ENCODE measurements at regions of chr15 and their contacts with region 1.

Region 1: GRCh38 chr15:58770857-58771620 is at the start of gene MINDY2:
- DNase-seq: peak; percentile 92 to 97
- H3K4me3 ChIP-seq: peak within 1 kb of the TSS; percentile 80
- H3K27ac ChIP-seq: peak within 1 kb of the TSS; percentile 87
- H3K4me1 ChIP-seq: peaks cover 37% of the 10 kb centered on the region
- H3K27me3 ChIP-seq: no peaks in the 10 kb centered on the region
- CTCF ChIP-seq: no peak; the same call in 1 of the 2 replicates
- total RNA-seq, gene MINDY2: 18.4 and 22.8 TPM in 2 replicates

Region 2: DNA sequence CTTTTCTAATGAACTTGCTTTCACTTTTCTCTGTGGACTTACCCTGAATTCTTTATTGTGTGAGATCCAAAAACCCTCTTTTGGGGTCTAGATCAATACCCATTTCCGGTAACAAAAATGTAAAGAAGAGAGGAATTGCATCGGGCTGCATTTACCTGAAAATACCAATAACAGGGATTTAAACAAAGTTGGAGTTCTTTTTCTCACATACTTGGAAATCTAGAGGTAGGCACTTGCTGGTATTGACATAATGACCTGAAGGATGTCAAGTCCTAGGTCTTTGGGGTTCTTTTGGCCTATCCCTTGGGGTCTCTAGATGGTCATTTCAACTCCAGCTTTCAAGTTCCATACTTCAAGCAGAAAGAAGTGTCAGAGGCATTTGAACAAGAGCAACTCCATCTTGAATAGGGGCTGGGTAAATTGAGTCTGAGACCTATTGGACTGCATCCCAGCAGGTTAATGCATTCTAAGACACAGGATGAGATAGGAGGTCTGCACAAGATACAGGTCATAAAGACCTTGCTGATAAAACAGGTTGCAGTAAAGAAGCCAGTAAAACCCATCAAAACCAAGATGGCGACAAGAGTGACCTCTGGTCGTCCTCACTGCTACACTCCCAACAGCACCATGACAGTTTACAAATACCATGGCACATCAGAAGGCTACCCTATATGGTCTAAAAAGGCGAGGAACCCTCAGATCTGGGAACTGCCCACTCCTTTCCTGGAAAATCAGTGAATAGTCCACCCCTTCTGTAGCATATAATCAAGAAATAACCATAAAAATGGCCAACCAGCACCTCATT is 1987.0 kb before region 1 on chr15:
- CTCF ChIA-PET with region 1: interaction called, 15 read pairs
- POLR2A ChIA-PET with region 1: no interaction called
- intact Hi-C with region 1: no loop called
- DNase-seq: no peak
- H3K4me3 ChIP-seq: no peak overlapping the region
- H3K27ac ChIP-seq: no peak overlapping the region
- H3K4me1 ChIP-seq: no peaks in the 10 kb centered on the region
- H3K27me3 ChIP-seq: no peaks in the 10 kb centered on the region
- CTCF ChIP-seq: no peak

Region 3: GRCh38 chr15:58433597-58434333 is 337.3 kb before region 1 on chr15:
- CTCF ChIA-PET with region 1: no interaction called
- POLR2A ChIA-PET with region 1: no interaction called
- intact Hi-C with region 1: no loop called
- DNase-seq: no peak
- H3K4me3 ChIP-seq: no peak overlapping the region
- H3K27ac ChIP-seq: peak overlapping the region; percentile 71
- H3K4me1 ChIP-seq: peaks cover 41% of the 10 kb centered on the region
- H3K27me3 ChIP-seq: no peaks in the 10 kb centered on the region
- CTCF ChIP-seq: no peak

Region 4: DNA sequence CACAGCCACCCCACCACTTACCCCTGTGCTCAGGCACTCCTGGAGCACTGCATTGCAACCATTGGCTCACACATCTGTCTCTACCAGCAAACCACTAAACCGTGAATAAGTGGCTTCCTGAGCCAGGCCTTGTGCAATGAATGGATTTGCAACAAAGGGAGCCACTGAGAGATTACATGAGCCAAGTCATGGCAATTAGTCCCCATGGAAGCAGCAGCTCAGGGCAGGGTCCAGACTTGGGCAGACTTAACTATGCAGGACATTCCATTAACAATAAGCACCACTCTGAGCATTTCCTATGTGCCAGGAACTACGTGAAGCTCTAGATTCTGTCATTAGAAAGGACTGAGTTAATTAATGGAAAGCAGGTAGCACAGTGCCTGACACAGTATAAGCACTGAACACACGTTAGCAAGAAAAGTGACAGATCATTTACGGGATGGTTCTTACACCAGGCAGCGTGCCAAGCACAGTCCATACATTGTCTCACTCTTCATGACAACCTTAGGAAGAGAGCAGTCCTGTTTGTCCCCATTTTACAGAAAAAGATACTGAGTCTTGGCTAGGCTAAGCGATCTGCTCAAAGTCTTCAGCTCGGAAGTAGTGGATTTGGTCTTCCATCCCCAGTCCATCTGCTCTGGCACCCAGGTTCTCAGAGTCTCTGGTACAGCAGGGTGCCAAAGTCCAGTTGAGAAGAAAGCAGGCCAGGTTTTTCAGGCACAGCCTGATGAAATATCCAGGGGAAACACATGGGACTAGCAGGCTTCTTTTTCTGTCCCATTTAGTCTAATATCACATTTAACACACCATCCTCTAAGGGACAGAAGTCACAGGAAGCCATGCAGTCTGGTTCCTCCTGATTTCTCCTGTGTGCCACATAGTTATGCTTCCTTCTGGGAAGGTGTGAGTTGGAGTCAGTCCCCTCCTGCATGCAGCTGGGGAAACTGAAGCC is 295.2 kb before region 1 on chr15:
- CTCF ChIA-PET with region 1: no interaction called
- POLR2A ChIA-PET with region 1: no interaction called
- intact Hi-C with region 1: loop called (anchors 10 kb)
- DNase-seq: peak; percentile 8 to 52
- H3K4me3 ChIP-seq: no peak overlapping the region
- H3K27ac ChIP-seq: no peak overlapping the region
- H3K4me1 ChIP-seq: peaks cover 44% of the 10 kb centered on the region
- H3K27me3 ChIP-seq: no peaks in the 10 kb centered on the region
- CTCF ChIP-seq: no peak

Region 5: GRCh38 chr15:58551764-58552504 is 219.1 kb before region 1 on chr15:
- CTCF ChIA-PET with region 1: no interaction called
- POLR2A ChIA-PET with region 1: no interaction called
- intact Hi-C with region 1: loop called (anchors 10 kb)
- DNase-seq: peak; percentile 59 to 92
- H3K4me3 ChIP-seq: peak overlapping the region; percentile 44; the same call in 1 of the 2 replicates
- H3K27ac ChIP-seq: peak overlapping the region; percentile 97
- H3K4me1 ChIP-seq: peaks cover 55% of the 10 kb centered on the region
- H3K27me3 ChIP-seq: no peaks in the 10 kb centered on the region
- CTCF ChIP-seq: no peak

Region 6: GRCh38 chr15:58724466-58724865 is 46.6 kb before region 1 on chr15:
- CTCF ChIA-PET with region 1: interaction called, 15 read pairs
- POLR2A ChIA-PET with region 1: no interaction called
- intact Hi-C with region 1: no loop called
- DNase-seq: peak in 1 of 2 experiments; percentile 35
- H3K4me3 ChIP-seq: no peak overlapping the region
- H3K27ac ChIP-seq: peak overlapping the region; percentile 43; the same call in 1 of the 2 replicates
- H3K4me1 ChIP-seq: no peaks in the 10 kb centered on the region
- H3K27me3 ChIP-seq: no peaks in the 10 kb centered on the region
- CTCF ChIP-seq: no peak

Region 7: DNA sequence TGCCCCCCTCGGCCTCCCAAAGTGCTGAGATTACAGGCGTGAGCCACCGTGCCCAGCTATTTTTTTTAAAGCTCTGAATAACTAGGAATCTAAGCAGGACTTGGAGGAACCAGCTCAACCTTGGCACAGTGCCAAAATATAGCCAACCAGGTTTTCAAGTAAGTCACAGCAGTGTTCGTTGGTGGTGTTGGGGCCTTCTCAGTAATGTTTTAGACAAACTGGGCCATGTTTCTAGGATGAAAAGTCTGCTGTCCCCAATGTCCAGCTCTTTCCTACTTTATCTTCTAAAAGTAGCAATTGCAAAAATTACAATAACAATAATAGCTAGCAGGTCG is 15.1 kb before region 1 on chr15:
- CTCF ChIA-PET with region 1: interaction called, 3 read pairs
- POLR2A ChIA-PET with region 1: interaction called, 15 read pairs
- intact Hi-C with region 1: no loop called
- DNase-seq: peak in 1 of 2 experiments; percentile 7
- H3K4me3 ChIP-seq: no peak overlapping the region
- H3K27ac ChIP-seq: no peak overlapping the region
- H3K4me1 ChIP-seq: no peaks in the 10 kb centered on the region
- H3K27me3 ChIP-seq: no peaks in the 10 kb centered on the region
- CTCF ChIP-seq: no peak

Region 8: DNA sequence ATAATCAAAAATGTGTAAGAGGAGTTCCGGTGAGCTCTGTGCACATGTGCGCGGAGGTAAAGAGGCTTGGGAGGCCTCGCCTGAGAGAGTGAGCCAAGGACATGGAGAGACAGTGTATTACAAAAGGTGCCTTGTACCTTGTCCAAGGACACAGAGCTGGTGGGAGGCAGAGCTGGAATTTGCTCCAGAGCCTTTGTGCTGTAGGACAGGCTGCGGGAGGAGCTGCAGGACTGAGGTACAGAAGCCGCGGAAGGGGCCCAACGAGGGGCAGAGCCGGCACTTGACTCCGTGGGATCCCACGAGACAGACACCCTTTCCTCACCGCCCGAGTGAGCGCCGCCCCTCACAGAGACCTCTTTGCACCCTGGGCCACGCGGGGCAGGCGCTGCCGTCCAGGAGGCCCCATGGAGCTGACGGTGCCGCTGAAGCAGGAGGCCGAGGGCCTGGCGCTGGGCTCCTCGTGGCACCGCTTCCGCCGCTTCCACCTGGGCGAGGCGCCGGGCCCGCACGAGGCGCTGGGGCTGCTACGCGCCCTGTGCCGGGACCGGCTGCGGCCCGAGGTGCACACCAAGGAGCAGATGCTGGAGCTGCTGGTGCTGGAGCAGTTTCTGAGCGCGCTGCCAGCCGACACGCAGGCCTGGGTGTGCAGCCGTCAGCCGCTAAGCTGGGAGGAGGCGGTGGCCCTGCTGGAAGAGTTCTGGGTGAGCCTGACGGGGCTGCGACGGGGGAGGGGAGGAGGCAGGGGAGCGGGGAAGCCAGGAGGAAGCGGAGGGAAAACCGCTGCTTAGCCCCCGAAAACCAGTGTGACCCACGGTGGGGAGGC is 93.8 kb after region 1 on chr15:
- CTCF ChIA-PET with region 1: no interaction called
- POLR2A ChIA-PET with region 1: interaction called, 24 read pairs
- intact Hi-C with region 1: loop called (anchors 2 kb)
- DNase-seq: peak; percentile 47 to 54
- H3K4me3 ChIP-seq: peak overlapping the region; percentile 58
- H3K27ac ChIP-seq: peak overlapping the region; percentile 77
- H3K4me1 ChIP-seq: no peaks in the 10 kb centered on the region
- H3K27me3 ChIP-seq: no peaks in the 10 kb centered on the region
- CTCF ChIP-seq: no peak

Region 9: GRCh38 chr15:59315914-59316451 is 544.9 kb after region 1 on chr15:
- CTCF ChIA-PET with region 1: no interaction called
- POLR2A ChIA-PET with region 1: no interaction called
- intact Hi-C with region 1: no loop called
- DNase-seq: no peak
- H3K4me3 ChIP-seq: no peak overlapping the region
- H3K27ac ChIP-seq: no peak overlapping the region
- H3K4me1 ChIP-seq: peaks cover 28% of the 10 kb centered on the region
- H3K27me3 ChIP-seq: no peaks in the 10 kb centered on the region
- CTCF ChIP-seq: no peak

Measured in PC-9 (cell line).